ENCODE measurements at regions of chr9 and their contacts with region 1.

Region 1: DNA sequence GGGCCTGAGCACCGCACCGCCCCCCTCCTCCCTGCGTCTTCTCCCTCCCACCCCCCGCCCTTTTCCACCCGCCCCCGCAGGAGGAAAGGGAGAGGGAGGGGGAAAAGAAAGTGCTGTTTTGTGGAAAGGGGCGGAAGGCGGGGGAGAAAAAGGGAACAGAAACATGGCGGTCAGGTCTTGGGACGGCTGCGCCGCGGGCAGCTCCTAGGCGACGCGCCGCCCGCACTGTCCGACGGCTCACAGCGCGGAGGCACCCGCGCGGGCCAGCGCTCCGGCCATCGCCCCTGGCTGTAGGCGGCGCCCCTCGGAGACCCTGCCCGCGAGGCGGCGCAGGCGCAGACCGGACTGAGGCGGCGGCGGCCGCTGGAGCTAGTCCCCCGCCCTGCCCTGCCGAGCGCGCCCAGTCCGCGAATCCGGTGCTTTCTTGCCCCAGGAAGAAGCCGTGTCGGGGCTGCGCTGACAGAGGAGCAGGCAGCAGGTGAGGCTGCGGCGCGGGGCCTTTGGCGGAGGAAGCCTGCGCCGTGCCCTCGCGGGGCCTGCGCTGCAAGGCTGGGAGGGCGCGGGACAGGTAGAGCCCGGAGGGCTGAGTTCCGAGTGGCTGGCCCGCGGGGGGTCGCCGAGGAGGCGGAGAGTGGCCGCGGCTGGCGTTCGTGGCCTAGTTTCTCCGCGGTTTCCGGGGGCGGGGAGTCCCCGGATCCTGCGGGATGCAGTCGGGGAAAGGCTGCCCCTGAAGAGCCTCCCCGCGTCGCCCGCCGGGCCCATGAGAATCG is at the start of gene DENND4C:
- DNase-seq: peak; percentile 85
- ATAC-seq: peak; percentile 94
- H3K4me3 ChIP-seq: peak within 1 kb of the TSS; percentile 88 to 92 (median 91)
- H3K27ac ChIP-seq: peak within 1 kb of the TSS; percentile 94
- H3K4me1 ChIP-seq: peaks cover 24% of the 10 kb centered on the region
- H3K27me3 ChIP-seq: no peaks in the 10 kb centered on the region; a peak in 1 of 5 replicates
- CTCF ChIP-seq: peak; percentile 56; the same call in 1 of the 2 replicates
- EP300 ChIP-seq: peak in 1 of 2 experiments; percentile 11; a peak in 1 of 4 replicates
- POLR2A ChIP-seq: peak; percentile 87 to 88
- RAD21 ChIP-seq: peak; percentile 60
- total RNA-seq, gene DENND4C: 27.2 and 37.8 TPM in 2 replicates

Region 2: DNA sequence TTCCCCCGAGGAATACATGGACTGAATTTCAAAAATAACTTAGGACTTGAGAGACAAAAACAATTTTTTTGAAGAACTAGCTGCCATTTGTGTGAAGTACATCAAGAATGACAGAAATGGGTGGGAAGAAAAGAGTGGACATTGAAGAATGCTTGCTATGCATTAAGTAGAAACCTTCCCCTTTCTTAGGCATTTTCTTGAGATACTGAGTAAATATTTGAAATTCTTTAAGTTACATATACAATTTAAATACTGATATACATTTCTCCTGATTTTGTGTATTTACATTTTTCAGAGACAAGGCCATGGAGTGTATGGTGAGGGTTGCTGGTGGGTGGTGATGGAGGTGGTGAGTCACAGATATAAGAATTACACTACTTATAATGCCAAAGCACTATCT is 1075.9 kb before region 1 on chr9:
- CTCF ChIA-PET with region 1: no interaction called
- POLR2A ChIA-PET with region 1: no interaction called
- in situ Hi-C with region 1: no loop called
- intact Hi-C with region 1: no loop called
- DNase-seq: no peak
- ATAC-seq: no peak
- H3K4me3 ChIP-seq: no peak overlapping the region
- H3K27ac ChIP-seq: no peak overlapping the region
- H3K4me1 ChIP-seq: no peaks in the 10 kb centered on the region
- H3K27me3 ChIP-seq: no peaks in the 10 kb centered on the region
- CTCF ChIP-seq: no peak
- EP300 ChIP-seq: no peak
- POLR2A ChIP-seq: no peak
- RAD21 ChIP-seq: no peak

Region 3: GRCh38 chr9:19127881-19128500 is 102.5 kb before region 1 on chr9:
- CTCF ChIA-PET with region 1: no interaction called
- POLR2A ChIA-PET with region 1: no interaction called
- in situ Hi-C with region 1: no loop called
- intact Hi-C with region 1: loop called (anchors 10 kb)
- DNase-seq: no peak
- ATAC-seq: peak; percentile 7
- H3K4me3 ChIP-seq: peak overlapping the region; percentile 73 to 89 (median 81); a peak in 4 of 6 replicates
- H3K27ac ChIP-seq: peak overlapping the region; percentile 92
- H3K4me1 ChIP-seq: peaks cover 81% of the 10 kb centered on the region
- H3K27me3 ChIP-seq: peaks cover 0 to 5% of the 10 kb centered on the region in 2 experiments; a peak in 1 of 5 replicates
- CTCF ChIP-seq: no peak
- EP300 ChIP-seq: no peak
- POLR2A ChIP-seq: no peak
- RAD21 ChIP-seq: no peak

Region 4: GRCh38 chr9:19184144-19184917 is 46.2 kb before region 1 on chr9:
- CTCF ChIA-PET with region 1: no interaction called
- POLR2A ChIA-PET with region 1: interaction called, 4 read pairs
- in situ Hi-C with region 1: no loop called
- intact Hi-C with region 1: loop called (anchors 2 kb)
- DNase-seq: peak; percentile 76
- ATAC-seq: peak; percentile 98
- H3K4me3 ChIP-seq: peak overlapping the region in 1 of 3 experiments; percentile 39; a peak in 2 of 6 replicates
- H3K27ac ChIP-seq: peak overlapping the region; percentile 61
- H3K4me1 ChIP-seq: peaks cover 30% of the 10 kb centered on the region
- H3K27me3 ChIP-seq: no peaks in the 10 kb centered on the region
- CTCF ChIP-seq: peak; percentile 23
- EP300 ChIP-seq: peak in 1 of 2 experiments; percentile 37; a peak in 1 of 4 replicates
- POLR2A ChIP-seq: no peak
- RAD21 ChIP-seq: no peak

Region 5: GRCh38 chr9:19201899-19202891 is 28.3 kb before region 1 on chr9:
- CTCF ChIA-PET with region 1: no interaction called
- POLR2A ChIA-PET with region 1: interaction called, 22 read pairs
- in situ Hi-C with region 1: no loop called
- intact Hi-C with region 1: loop called (anchors 2 kb)
- DNase-seq: peak; percentile 92
- ATAC-seq: peak; percentile 92
- H3K4me3 ChIP-seq: peak overlapping the region; percentile 9 to 39 (median 20); a peak in 3 of 6 replicates
- H3K27ac ChIP-seq: peak overlapping the region; percentile 82
- H3K4me1 ChIP-seq: peaks cover 26% of the 10 kb centered on the region
- H3K27me3 ChIP-seq: no peaks in the 10 kb centered on the region
- CTCF ChIP-seq: no peak
- EP300 ChIP-seq: peak; percentile 84 to 96; a peak in 3 of 4 replicates
- POLR2A ChIP-seq: no peak
- RAD21 ChIP-seq: no peak

Region 6: DNA sequence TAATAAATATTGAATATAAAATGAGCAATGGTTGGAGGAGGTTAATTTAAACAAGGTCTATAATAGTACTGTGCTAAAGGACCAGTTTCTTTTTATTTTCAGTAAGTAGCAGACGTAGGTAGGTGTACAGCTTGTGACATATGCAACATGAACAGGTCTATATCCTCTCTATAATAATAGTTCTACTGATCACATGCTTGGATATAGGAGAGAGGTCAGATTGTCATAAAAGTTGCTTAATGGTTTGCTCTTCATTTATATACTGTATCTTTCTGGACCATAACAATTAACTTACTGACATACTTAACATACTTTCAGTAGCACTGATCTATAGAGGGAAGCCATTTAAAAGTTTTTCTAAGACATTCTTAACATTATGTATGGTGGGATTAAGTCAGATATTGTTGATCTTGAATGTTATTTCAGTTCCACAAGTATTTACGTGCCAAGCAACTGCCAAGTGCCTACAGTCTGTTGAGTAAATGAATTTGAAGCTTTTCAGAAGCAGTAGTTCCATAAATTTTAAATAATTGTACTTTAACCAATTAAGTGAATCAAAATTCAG is 68.0 kb after region 1 on chr9:
- CTCF ChIA-PET with region 1: no interaction called
- POLR2A ChIA-PET with region 1: no interaction called
- in situ Hi-C with region 1: no loop called
- intact Hi-C with region 1: loop called (anchors 10 kb)
- DNase-seq: no peak
- ATAC-seq: no peak
- H3K4me3 ChIP-seq: no peak overlapping the region
- H3K27ac ChIP-seq: no peak overlapping the region
- H3K4me1 ChIP-seq: no peaks in the 10 kb centered on the region
- H3K27me3 ChIP-seq: no peaks in the 10 kb centered on the region
- CTCF ChIP-seq: no peak
- EP300 ChIP-seq: no peak
- POLR2A ChIP-seq: no peak
- RAD21 ChIP-seq: no peak

Region 7: GRCh38 chr9:19379697-19380046 is 149.1 kb after region 1 on chr9:
- CTCF ChIA-PET with region 1: no interaction called
- POLR2A ChIA-PET with region 1: interaction called, 10 read pairs
- in situ Hi-C with region 1: no loop called
- intact Hi-C with region 1: loop called (anchors 5 kb)
- DNase-seq: no peak
- ATAC-seq: peak; percentile 51
- H3K4me3 ChIP-seq: peak overlapping the region; percentile 73 to 98 (median 93)
- H3K27ac ChIP-seq: peak overlapping the region; percentile 91
- H3K4me1 ChIP-seq: peaks cover 31% of the 10 kb centered on the region
- H3K27me3 ChIP-seq: no peaks in the 10 kb centered on the region; a peak in 1 of 5 replicates
- CTCF ChIP-seq: no peak
- EP300 ChIP-seq: no peak
- POLR2A ChIP-seq: no peak
- RAD21 ChIP-seq: no peak

Region 8: GRCh38 chr9:19456996-19457692 is 226.6 kb after region 1 on chr9:
- CTCF ChIA-PET with region 1: no interaction called
- POLR2A ChIA-PET with region 1: no interaction called
- in situ Hi-C with region 1: no loop called
- intact Hi-C with region 1: loop called (anchors 5 kb)
- DNase-seq: peak; percentile 66
- ATAC-seq: peak; percentile 95
- H3K4me3 ChIP-seq: peak overlapping the region in 2 of 3 experiments; percentile 30; a peak in 2 of 6 replicates
- H3K27ac ChIP-seq: no peak overlapping the region
- H3K4me1 ChIP-seq: peaks cover 5% of the 10 kb centered on the region; the same call in 1 of the 2 replicates
- H3K27me3 ChIP-seq: no peaks in the 10 kb centered on the region
- CTCF ChIP-seq: peak; percentile 92
- EP300 ChIP-seq: no peak
- POLR2A ChIP-seq: no peak
- RAD21 ChIP-seq: peak; percentile 91

Measured in HepG2 (cell line).